Esophagus muscularis mucosa (tissue), 4 donors: ENCODE measurements at regions of chr3 and their contacts with region 1.

Region 1: GRCh38 chr3:45507820-45508317 is 86.7 kb upstream of the LIMD1 start:
- DNase-seq: no peak
- H3K4me3 ChIP-seq: no peak overlapping the region
- H3K27ac ChIP-seq: no peak overlapping the region
- H3K4me1 ChIP-seq: peaks cover 7 to 25% (median 8%) of the 10 kb centered on the region in 4 donors
- H3K27me3 ChIP-seq: no peaks in the 10 kb centered on the region
- CTCF ChIP-seq: peak in 1 of 3 experiments; percentile 21
- EP300 ChIP-seq: no peak
- POLR2A ChIP-seq: no peak

Region 2: GRCh38 chr3:45224824-45225464 is 282.9 kb before region 1 on chr3:
- intact Hi-C with region 1: loop called (anchors 5 kb)
- DNase-seq: no peak
- H3K4me3 ChIP-seq: peak overlapping the region; percentile 63 to 75 (median 66)
- H3K27ac ChIP-seq: no peak overlapping the region
- H3K4me1 ChIP-seq: peaks cover 10 to 24% (median 18%) of the 10 kb centered on the region in 4 donors
- H3K27me3 ChIP-seq: peaks cover 0 to 42% (median 0%) of the 10 kb centered on the region in 4 donors
- CTCF ChIP-seq: peak; percentile 47 to 56 (median 56)
- EP300 ChIP-seq: no peak
- POLR2A ChIP-seq: no peak

Region 3: DNA sequence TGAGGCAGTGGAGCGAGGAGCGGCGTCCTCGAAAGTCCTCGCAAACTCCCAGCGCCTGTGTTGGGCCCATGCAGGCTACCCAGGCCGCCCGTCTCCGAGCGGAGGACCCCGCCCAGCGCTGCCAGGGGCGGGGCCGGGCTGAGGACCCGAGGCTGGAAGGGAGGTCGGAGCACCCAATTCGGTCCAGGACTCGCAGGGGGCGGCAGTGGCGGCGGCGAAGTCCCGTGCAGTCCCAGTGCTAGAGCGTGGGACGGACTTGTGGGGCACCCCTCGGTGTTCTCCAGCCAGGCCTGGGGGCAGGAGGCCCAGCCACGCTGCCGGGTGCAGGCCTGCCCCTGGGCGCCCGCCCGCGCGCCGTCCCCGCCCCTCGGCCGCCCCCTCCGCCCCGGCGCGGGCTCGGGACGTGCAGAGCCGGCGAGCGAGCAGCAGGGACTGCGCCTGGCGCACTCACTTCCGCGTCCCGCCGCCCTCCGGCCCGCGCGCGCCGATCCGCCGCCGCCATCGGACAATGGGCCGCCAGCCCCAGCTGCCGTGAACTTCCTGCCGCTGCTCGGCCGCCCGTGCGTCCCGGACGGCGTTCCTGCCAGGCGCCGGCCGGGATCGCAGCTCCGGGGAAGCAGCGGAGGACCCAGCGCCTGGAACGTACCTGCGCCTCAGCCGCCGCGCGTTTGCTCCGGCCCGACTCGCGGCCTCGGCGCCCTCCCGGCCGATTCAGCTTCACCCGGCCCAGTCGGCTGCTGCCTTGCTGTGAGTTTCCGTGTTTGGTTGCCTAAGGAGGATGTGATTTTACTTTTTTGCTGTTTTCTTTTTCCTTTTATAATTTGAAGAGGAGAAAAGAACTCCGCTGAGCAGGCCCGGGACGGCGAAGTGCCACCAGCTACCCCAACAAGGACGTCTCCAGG is 86.1 kb after region 1 on chr3:
- intact Hi-C with region 1: loop called (anchors 5 kb)
- DNase-seq: no peak
- H3K4me3 ChIP-seq: peak overlapping the region; percentile 63 to 80 (median 70)
- H3K27ac ChIP-seq: peak overlapping the region; percentile 81 to 94 (median 88)
- H3K4me1 ChIP-seq: peaks cover 50 to 60% (median 59%) of the 10 kb centered on the region in 4 donors
- H3K27me3 ChIP-seq: no peaks in the 10 kb centered on the region
- CTCF ChIP-seq: no peak
- EP300 ChIP-seq: no peak
- POLR2A ChIP-seq: no peak

Region 4: GRCh38 chr3:45656575-45657363 is 148.9 kb after region 1 on chr3:
- intact Hi-C with region 1: loop called (anchors 1 kb)
- DNase-seq: peak; percentile 97
- H3K4me3 ChIP-seq: no peak overlapping the region
- H3K27ac ChIP-seq: peak overlapping the region in 1 of 4 donors; percentile 22
- H3K4me1 ChIP-seq: peaks cover 24 to 60% (median 49%) of the 10 kb centered on the region in 4 donors
- H3K27me3 ChIP-seq: no peaks in the 10 kb centered on the region
- CTCF ChIP-seq: peak; percentile 92 to 94 (median 94)
- EP300 ChIP-seq: no peak
- POLR2A ChIP-seq: no peak

Region 5: DNA sequence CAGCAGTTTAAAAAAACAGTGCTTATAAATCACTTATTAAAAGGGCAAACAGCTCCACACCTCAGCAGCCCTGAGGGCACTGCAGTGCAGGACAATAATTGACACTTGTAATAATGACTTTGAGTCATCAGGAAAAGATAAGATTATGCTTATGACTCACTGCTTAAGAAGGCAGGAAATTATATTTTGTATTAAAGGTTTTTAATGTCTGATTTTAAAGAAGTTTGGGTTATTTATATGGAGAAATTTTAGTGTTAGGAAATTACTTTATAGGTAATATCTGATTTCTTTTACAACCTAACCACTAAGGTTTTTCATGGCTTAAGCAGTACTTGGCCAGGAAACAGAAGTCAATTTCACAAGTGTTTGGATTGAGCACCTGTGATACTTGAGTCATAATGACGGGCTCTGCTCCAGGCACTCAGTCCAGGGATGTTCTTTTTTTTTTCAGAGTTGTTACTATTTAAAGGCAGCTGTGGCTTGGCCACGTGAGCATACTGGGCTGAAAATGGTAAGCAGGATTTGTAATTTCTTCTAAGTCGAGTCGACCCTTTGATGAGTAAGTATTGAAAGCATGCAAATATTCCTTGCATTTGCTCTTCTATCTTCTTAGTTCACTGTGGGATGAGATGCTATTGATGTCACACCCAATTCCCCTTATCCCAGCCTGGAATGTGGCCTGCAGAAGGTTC is 310.1 kb after region 1 on chr3:
- intact Hi-C with region 1: no loop called
- DNase-seq: no peak
- H3K4me3 ChIP-seq: no peak overlapping the region
- H3K27ac ChIP-seq: peak overlapping the region; percentile 68 to 83 (median 82)
- H3K4me1 ChIP-seq: peaks cover 28 to 39% (median 36%) of the 10 kb centered on the region in 4 donors
- H3K27me3 ChIP-seq: no peaks in the 10 kb centered on the region
- CTCF ChIP-seq: no peak
- EP300 ChIP-seq: no peak
- POLR2A ChIP-seq: no peak